Right cardiac atrium (tissue), 5 donors: ENCODE measurements at regions of chr19 and their contacts with region 1.

Region 1: DNA sequence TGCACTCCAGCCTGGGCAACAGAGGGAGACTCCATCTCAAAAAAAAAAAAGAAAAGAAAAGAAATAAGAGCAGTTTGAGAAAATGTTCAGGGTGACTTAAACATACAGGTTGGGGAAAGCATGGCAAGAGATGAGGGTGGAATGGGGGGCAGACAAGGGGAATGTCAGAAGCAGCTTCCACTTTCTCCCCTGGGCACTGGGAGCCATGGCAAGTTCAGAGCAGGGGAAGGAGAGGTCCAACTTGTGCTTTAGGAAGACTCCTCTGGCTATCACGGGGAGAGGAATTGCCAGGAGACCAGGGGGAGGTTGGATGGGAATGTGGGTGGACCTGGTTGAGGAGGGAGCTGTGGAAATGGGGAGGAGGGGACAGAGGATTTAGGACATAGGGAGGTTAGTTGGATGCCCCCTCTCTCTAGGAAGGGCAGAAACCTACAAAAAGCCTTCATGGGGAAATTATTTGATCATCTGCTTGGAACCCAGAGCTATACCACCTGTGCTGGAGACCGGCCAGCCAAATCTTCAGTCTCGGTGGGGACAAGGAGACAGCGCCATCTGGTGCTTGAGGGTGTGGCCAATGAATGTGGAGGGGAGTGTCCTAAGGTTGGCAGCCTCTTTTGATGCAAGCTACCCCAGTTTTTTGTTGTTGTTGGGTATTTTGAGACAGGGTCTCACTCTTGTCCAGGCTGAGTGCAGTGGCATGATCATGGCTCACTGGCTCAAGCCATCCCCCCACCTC is 7.3 kb upstream of the STRN4 start:
- DNase-seq: peak in 2 of 3 donors; percentile 68 to 78
- ATAC-seq: no peak
- H3K4me3 ChIP-seq: no peak overlapping the region
- H3K27ac ChIP-seq: no peak overlapping the region
- H3K4me1 ChIP-seq: no peaks in the 10 kb centered on the region
- H3K27me3 ChIP-seq: no peaks in the 10 kb centered on the region

Region 2: DNA sequence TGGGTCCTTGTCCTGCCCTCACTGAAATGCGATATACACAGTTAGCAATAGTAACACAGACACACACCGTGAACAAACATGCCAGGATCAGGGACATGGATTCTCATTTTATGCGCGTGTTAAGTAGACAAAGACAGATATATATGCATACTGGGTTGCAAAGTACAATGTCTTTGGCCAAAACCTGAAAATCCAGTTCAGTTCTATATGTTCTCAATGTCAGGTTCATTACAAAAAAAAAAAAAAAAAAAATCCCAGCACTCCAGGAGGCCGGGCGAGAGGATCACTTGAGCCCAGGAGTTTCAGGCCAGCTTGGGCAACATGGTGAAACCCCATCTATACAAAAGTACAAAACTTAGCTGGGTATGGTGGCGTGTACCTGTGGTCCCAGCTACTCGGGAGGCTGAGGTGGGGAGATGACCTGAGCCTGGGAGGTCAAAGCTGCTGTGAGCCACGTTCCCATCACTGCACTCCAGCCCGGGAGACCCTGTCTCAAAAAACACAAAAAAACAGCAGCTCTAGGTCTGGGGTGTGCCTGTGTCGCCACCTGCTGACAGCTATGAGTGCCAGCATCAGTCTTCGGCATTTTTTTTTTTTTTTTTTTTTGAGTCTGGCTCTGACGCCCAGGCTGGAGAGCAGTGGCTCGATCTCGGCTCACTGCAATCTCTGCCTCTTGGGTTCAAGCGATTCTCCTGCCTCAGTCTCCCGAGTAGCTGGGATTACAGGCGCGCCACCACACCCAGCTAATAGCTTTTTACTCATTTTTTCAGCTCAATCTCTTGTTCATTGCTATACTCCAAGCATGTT is 86.8 kb after region 1 on chr19:
- intact Hi-C with region 1: loop called (anchors 2 kb)
- DNase-seq: peak; percentile 47 to 84 (median 76)
- ATAC-seq: peak; percentile 52 to 55
- H3K4me3 ChIP-seq: no peak overlapping the region
- H3K27ac ChIP-seq: peak overlapping the region; percentile 13
- H3K4me1 ChIP-seq: peaks cover 2% of the 10 kb centered on the region
- H3K27me3 ChIP-seq: no peaks in the 10 kb centered on the region

Region 3: DNA sequence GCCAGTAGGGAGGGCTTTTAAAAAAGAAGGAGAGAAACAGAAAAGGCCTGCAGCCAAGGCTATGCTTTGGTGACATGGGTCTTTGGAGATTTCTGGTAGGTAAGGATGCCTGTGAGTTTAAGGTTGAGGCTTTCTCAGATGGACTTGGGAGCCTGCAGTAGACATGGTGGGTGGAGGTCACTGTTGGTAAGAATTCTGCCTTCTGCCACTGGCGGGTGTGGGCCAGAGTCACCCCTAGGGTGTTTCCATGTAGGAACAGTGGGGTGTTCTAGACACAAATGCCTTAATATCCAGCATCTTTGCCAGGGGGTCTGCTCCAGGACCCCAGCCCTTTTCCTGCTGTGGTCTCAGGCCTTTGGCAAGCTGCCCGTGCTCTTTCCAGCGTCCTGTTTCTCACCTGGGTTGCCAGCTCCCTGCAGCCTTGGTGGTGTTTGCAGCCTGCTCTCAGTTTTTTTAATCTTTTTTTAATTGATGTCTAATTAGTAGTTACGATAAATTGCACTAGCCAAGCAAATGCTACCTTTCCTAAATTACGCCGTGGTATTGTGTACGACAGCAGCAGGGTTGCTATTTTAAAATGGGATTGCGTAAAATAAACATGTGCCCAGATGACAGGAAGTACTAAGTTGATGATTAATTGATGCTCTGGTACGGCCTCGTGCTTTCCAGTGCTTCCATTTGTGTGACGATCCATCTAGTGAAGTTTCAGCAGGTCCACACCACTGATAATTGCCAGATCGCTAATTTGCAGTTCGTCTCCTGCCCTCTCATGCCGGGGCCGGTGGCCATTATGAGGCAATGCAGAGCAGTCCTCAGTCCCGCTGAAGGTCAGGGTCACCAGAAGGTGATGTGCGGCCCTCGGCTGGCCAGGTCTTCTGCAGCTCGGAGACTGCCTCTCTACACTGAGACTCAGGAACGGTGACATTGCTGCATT is 230.8 kb after region 1 on chr19:
- intact Hi-C with region 1: loop called in 1 of 4 experiments (anchors 10 kb)
- DNase-seq: peak in 1 of 3 donors; percentile 51
- ATAC-seq: peak; percentile 25 to 61
- H3K4me3 ChIP-seq: no peak overlapping the region
- H3K27ac ChIP-seq: peak overlapping the region; percentile 60
- H3K4me1 ChIP-seq: peaks cover 19% of the 10 kb centered on the region
- H3K27me3 ChIP-seq: no peaks in the 10 kb centered on the region

Region 4: DNA sequence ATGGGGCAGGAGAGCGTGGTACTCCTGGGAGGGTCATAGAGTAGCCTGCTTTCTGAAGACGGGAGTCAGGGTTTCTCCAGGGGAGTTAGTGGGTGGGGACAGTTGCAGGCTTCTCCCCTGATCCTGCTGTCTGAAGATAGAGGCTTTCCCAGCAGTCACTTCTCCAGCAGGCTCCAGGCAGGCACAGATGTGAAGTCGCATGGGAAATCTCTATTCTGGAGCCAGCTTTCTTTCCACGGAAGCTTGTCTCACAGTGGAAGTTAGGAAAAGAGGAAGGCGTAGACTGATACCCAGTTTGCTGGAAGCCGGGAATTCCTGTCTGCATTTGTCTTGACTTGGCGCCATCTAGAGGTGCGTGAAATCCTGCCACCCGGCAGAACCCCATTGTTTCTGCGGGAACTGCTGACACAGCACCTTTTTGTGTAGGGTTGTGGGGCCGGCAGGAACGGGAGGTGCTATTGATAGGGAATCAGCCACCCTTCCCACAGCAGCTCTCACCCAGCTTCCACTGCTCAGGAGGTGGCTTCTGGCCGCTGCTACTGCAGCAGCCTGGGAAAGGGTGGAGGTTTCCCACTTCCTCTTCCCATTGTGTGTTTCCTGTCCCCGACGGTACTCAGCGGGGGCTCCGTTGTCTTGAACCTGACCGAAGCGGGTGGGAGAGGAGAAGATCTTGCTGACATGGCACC is 237.5 kb after region 1 on chr19:
- intact Hi-C with region 1: loop called in 3 of 4 experiments (anchors 10 kb)
- DNase-seq: peak; percentile 85 to 93 (median 90)
- ATAC-seq: peak; percentile 80 to 83
- H3K4me3 ChIP-seq: no peak overlapping the region
- H3K27ac ChIP-seq: peak overlapping the region; percentile 85
- H3K4me1 ChIP-seq: peaks cover 10% of the 10 kb centered on the region
- H3K27me3 ChIP-seq: no peaks in the 10 kb centered on the region